Activated CD4-positive, alpha-beta T cell treated with anti-CD3 and anti-CD28 coated beads for 36 hours (primary cell): ENCODE measurements at regions of chr9 and their contacts with region 1.

Region 1: DNA sequence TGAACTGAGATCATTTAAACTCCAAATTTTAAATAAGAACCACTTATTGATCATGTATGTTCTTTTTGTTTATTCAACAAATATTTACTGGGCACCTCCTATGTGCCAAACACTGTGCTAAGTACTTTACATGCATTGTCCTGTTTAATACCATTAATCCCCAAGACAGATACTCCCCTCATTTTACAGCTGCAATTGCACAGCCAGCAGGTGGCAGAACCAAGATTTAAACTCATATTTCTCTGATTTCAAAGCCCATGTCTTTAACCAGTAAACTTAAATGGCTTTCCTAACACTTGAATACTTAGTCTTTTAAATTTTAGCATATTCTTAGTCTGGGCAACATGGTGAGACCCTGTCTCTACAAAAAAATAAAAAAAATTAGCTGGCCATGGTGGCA is 43.4 kb upstream of the KIAA1958 start:
- DNase-seq: peak; percentile 33
- ATAC-seq: no peak
- H3K4me3 Mint-ChIP-seq: no peak overlapping the region
- H3K27ac Mint-ChIP-seq: no peak overlapping the region
- H3K4me1 Mint-ChIP-seq: no peaks in the 10 kb centered on the region
- H3K27me3 Mint-ChIP-seq: no peaks in the 10 kb centered on the region

Region 2: GRCh38 chr9:112465352-112465751 is 22.2 kb after region 1 on chr9:
- CTCF ChIA-PET with region 1: interaction called, 10 read pairs
- POLR2A ChIA-PET with region 1: no interaction called
- intact Hi-C with region 1: no loop called
- DNase-seq: no peak
- ATAC-seq: no peak
- H3K4me3 Mint-ChIP-seq: no peak overlapping the region
- H3K27ac Mint-ChIP-seq: no peak overlapping the region
- H3K4me1 Mint-ChIP-seq: peaks cover 2% of the 10 kb centered on the region
- H3K27me3 Mint-ChIP-seq: no peaks in the 10 kb centered on the region

Region 3: GRCh38 chr9:112546149-112547012 is 103.2 kb after region 1 on chr9:
- CTCF ChIA-PET with region 1: no interaction called
- POLR2A ChIA-PET with region 1: no interaction called
- intact Hi-C with region 1: no loop called
- DNase-seq: peak; percentile 10
- ATAC-seq: peak; percentile 92
- H3K4me3 Mint-ChIP-seq: no peak overlapping the region
- H3K27ac Mint-ChIP-seq: peak overlapping the region; percentile 29
- H3K4me1 Mint-ChIP-seq: peaks cover 14% of the 10 kb centered on the region
- H3K27me3 Mint-ChIP-seq: no peaks in the 10 kb centered on the region

Region 4: GRCh38 chr9:112665347-112665746 is 222.1 kb after region 1 on chr9:
- CTCF ChIA-PET with region 1: interaction called, 3 read pairs
- POLR2A ChIA-PET with region 1: no interaction called
- intact Hi-C with region 1: loop called in 1 of 2 experiments (anchors 10 kb)
- DNase-seq: no peak
- ATAC-seq: no peak
- H3K4me3 Mint-ChIP-seq: no peak overlapping the region
- H3K27ac Mint-ChIP-seq: no peak overlapping the region
- H3K4me1 Mint-ChIP-seq: no peaks in the 10 kb centered on the region
- H3K27me3 Mint-ChIP-seq: no peaks in the 10 kb centered on the region

Region 5: DNA sequence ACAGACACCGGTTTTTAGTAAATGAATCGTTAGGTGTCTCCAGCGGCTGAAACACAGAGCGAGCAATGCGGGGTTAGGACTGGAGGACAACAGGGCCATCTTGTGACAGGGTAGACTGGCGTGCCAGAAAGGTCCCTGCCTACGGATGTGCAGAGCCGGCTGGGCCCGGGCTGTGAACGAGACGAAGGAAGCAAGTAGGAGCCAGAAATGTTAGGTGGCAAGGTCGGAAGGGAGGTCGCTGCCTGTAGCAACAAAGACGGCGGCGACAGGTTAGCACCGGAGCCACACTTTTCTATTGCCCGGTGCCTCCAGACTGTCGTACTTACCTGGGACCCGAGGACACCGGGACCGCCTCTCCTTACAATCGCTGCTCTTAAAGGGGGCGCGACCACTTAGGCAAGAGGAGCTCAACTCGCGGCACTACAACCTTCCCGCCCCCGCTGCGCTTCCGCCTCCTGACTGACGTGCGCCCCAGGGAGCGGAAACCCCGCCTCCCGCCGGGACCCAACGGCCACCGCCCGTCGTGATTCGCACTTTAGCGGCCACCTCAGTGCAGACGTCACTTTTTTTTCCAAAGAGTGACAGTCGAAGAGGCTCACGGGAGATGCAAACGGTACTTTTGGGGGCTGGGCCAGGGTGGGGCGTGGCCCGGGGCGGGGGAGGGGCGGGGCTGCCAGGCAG is 274.6 kb after region 1 on chr9 and contains the start of gene INIP:
- CTCF ChIA-PET with region 1: no interaction called
- POLR2A ChIA-PET with region 1: no interaction called
- intact Hi-C with region 1: loop called in 1 of 2 experiments (anchors 5 kb)
- DNase-seq: peak; percentile 99
- ATAC-seq: peak; percentile 93
- H3K4me3 Mint-ChIP-seq: peak within 1 kb of the TSS; percentile 89
- H3K27ac Mint-ChIP-seq: peak within 1 kb of the TSS; percentile 97
- H3K4me1 Mint-ChIP-seq: peaks cover 35% of the 10 kb centered on the region
- H3K27me3 Mint-ChIP-seq: no peaks in the 10 kb centered on the region
- total RNA-seq, gene INIP: 37.3 to 37.7 TPM